ENCODE measurements at regions of chr10 and their contacts with region 1.

Region 1: GRCh38 chr10:13299437-13300287 is at the start of gene PHYH:
- DNase-seq: peak; percentile 50 to 87
- H3K4me3 ChIP-seq: peak within 1 kb of the TSS; percentile 39 to 58 (median 54)
- H3K27ac ChIP-seq: peak within 1 kb of the TSS; percentile 71; the same call in 1 of the 2 replicates
- H3K4me1 ChIP-seq: peaks cover 0 to 6% (median 3%) of the 10 kb centered on the region in 4 experiments; a peak in 5 of 7 replicates
- H3K27me3 ChIP-seq: no peaks in the 10 kb centered on the region; a peak in 2 of 7 replicates
- CTCF ChIP-seq: no peak
- EP300 ChIP-seq: peak in 1 of 2 experiments; percentile 54; a peak in 1 of 3 replicates
- POLR2A ChIP-seq: peak; percentile 76 to 80
- RAD21 ChIP-seq: peak in 1 of 2 experiments; percentile 1; a peak in 1 of 4 replicates
- total RNA-seq, gene PHYH: 22.7 and 23.2 TPM in 2 replicates

Region 2: GRCh38 chr10:13087986-13088618 is 211.6 kb before region 1 on chr10:
- CTCF ChIA-PET with region 1: no interaction called
- POLR2A ChIA-PET with region 1: no interaction called
- DNase-seq: no peak
- H3K4me3 ChIP-seq: no peak overlapping the region
- H3K27ac ChIP-seq: no peak overlapping the region
- H3K4me1 ChIP-seq: no peaks in the 10 kb centered on the region
- H3K27me3 ChIP-seq: no peaks in the 10 kb centered on the region
- CTCF ChIP-seq: no peak
- EP300 ChIP-seq: no peak
- POLR2A ChIP-seq: no peak
- RAD21 ChIP-seq: no peak

Region 3: DNA sequence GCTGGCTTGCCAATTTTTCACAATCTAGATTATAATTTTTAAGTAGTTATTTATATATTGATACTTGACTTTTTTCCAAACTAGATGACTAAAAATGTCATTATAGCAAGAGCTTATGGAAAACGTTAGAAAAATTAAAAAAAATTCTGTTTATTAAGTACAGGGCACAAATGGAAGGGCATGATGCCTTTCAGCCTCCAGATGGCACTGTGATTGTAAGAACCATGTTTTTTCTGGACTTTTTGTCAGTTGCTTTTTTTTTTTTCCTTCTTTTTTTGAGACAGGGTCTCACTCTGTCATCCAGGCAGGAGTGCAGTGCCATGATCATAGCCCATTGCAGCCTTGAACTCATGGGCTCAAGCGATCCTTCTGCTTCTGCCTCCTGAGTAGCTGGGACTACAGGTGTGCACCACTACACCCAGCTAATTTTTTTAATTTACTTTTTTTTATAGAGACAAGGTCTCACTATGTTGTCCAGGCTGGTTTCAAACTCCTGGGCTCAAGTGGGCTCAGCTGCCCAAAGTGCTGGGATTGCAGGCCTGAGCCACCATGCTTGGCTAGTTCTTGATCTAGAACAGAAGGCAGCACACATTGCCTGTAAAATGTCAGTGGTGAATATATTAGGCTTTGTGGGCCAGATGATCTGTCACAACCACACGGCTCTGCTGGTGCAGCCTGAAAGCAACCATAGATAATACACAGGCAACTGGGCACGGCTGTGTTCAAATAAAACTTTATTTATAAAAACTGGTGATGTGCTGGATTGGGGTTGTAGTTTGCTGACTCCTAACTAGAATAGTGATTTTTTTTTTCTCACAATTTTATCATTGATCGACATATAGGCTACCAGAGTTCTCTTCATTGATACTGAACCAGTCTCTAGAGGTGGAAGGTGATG is 92.9 kb before region 1 on chr10:
- CTCF ChIA-PET with region 1: interaction called, 12 read pairs
- POLR2A ChIA-PET with region 1: interaction called, 4 read pairs
- DNase-seq: no peak
- H3K4me3 ChIP-seq: no peak overlapping the region
- H3K27ac ChIP-seq: no peak overlapping the region
- H3K4me1 ChIP-seq: peaks cover 0 to 4% (median 0%) of the 10 kb centered on the region in 4 experiments; a peak in 1 of 7 replicates
- H3K27me3 ChIP-seq: no peaks in the 10 kb centered on the region; a peak in 1 of 7 replicates
- CTCF ChIP-seq: peak in 2 of 3 experiments; percentile 46 to 51; a peak in 3 of 4 replicates
- EP300 ChIP-seq: no peak
- POLR2A ChIP-seq: no peak
- RAD21 ChIP-seq: peak; percentile 65 to 66

Region 4: DNA sequence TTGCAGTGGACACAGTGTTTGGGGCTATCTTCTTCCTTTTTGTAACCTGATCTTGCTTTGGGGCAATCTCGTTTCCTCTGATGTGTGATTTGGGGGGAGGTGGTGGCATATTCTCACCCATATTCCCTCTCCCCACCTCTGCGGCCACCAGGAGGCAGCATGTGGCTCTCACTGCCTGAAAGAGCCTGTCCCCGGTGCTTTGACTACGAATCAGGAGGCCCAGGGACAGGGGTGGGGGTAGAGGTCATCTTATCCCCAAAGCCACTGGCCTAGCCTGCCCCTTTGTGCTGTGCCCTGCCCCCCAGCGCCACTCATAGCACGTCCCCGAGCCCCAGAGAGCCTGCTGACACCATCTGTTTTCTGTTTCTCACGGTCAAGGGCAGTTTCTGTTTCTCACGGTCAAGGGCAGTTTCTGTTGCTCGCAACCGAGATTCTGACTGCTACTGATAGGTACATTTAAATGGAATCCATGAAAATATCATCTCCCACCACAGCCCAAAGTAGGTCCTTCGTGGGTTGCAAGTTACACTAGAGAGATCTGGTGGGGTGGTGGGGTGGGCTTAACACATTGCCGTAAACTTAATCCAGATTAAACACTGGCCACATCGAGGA is 28.0 kb before region 1 on chr10:
- CTCF ChIA-PET with region 1: interaction called, 25 read pairs
- POLR2A ChIA-PET with region 1: interaction called, 25 read pairs
- DNase-seq: peak; percentile 38 to 91
- H3K4me3 ChIP-seq: no peak overlapping the region; a peak in 1 of 8 replicates
- H3K27ac ChIP-seq: peak overlapping the region; percentile 36; the same call in 1 of the 2 replicates
- H3K4me1 ChIP-seq: peaks cover 4 to 12% (median 7%) of the 10 kb centered on the region in 4 experiments
- H3K27me3 ChIP-seq: no peaks in the 10 kb centered on the region; a peak in 1 of 7 replicates
- CTCF ChIP-seq: peak; percentile 72 to 88 (median 84)
- EP300 ChIP-seq: no peak
- POLR2A ChIP-seq: no peak
- RAD21 ChIP-seq: peak; percentile 60 to 77

Region 5: GRCh38 chr10:13276749-13277365 is 22.8 kb before region 1 on chr10:
- CTCF ChIA-PET with region 1: interaction called, 25 read pairs
- POLR2A ChIA-PET with region 1: interaction called, 25 read pairs
- DNase-seq: no peak
- H3K4me3 ChIP-seq: no peak overlapping the region
- H3K27ac ChIP-seq: no peak overlapping the region
- H3K4me1 ChIP-seq: peaks cover 0 to 5% (median 2%) of the 10 kb centered on the region in 4 experiments; a peak in 3 of 7 replicates
- H3K27me3 ChIP-seq: no peaks in the 10 kb centered on the region; a peak in 1 of 7 replicates
- CTCF ChIP-seq: peak in 1 of 3 experiments; percentile 14; a peak in 1 of 4 replicates
- EP300 ChIP-seq: no peak
- POLR2A ChIP-seq: no peak
- RAD21 ChIP-seq: peak; percentile 11 to 20; a peak in 1 of 4 replicates

Region 6: DNA sequence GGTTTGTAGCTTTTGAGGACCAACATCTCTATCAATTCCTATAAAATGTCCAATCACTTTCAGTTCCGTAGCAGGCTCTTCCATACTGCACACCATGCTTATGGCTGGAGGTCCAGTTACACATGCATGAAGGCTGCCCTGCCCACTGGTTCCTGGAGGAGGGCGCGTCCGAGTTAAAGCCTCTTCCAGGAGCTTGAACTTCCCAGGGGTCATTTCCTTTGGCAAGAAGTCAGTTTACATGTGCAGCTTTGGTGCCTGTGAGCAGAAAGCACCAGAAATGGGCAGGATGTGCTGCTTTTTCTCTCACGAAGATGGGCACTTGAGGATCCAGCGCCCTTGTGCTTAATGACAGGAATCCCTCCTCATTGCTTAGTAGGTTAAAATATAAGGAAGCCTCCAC is 17.8 kb after region 1 on chr10:
- CTCF ChIA-PET with region 1: interaction called, 9 read pairs
- POLR2A ChIA-PET with region 1: interaction called, 65 read pairs
- DNase-seq: no peak
- H3K4me3 ChIP-seq: no peak overlapping the region
- H3K27ac ChIP-seq: no peak overlapping the region
- H3K4me1 ChIP-seq: peaks cover 0 to 2% (median 0%) of the 10 kb centered on the region in 4 experiments; a peak in 1 of 7 replicates
- H3K27me3 ChIP-seq: no peaks in the 10 kb centered on the region
- CTCF ChIP-seq: no peak
- EP300 ChIP-seq: no peak
- POLR2A ChIP-seq: peak in 1 of 2 experiments; percentile 40; a peak in 1 of 3 replicates
- RAD21 ChIP-seq: no peak

Region 7: GRCh38 chr10:13359034-13359433 is 59.4 kb after region 1 on chr10:
- CTCF ChIA-PET with region 1: no interaction called
- POLR2A ChIA-PET with region 1: no interaction called
- DNase-seq: no peak
- H3K4me3 ChIP-seq: no peak overlapping the region
- H3K27ac ChIP-seq: no peak overlapping the region
- H3K4me1 ChIP-seq: no peaks in the 10 kb centered on the region; a peak in 1 of 7 replicates
- H3K27me3 ChIP-seq: no peaks in the 10 kb centered on the region
- CTCF ChIP-seq: no peak
- EP300 ChIP-seq: no peak
- POLR2A ChIP-seq: no peak
- RAD21 ChIP-seq: no peak

Region 8: GRCh38 chr10:13560597-13560996 is 260.9 kb after region 1 on chr10:
- CTCF ChIA-PET with region 1: no interaction called
- POLR2A ChIA-PET with region 1: no interaction called
- DNase-seq: no peak
- H3K4me3 ChIP-seq: no peak overlapping the region
- H3K27ac ChIP-seq: no peak overlapping the region
- H3K4me1 ChIP-seq: no peaks in the 10 kb centered on the region
- H3K27me3 ChIP-seq: no peaks in the 10 kb centered on the region
- CTCF ChIP-seq: no peak
- EP300 ChIP-seq: no peak
- POLR2A ChIP-seq: no peak
- RAD21 ChIP-seq: no peak

Measured in H1 (cell line).